Head of caudate nucleus (tissue), 42 donors: ENCODE measurements at regions of chr3 and their contacts with region 1.

Region 1: GRCh38 chr3:150603153-150603979 is at the start of gene SELENOT:
- DNase-seq: peak; percentile 85 to 95 (median 91)

Region 2: DNA sequence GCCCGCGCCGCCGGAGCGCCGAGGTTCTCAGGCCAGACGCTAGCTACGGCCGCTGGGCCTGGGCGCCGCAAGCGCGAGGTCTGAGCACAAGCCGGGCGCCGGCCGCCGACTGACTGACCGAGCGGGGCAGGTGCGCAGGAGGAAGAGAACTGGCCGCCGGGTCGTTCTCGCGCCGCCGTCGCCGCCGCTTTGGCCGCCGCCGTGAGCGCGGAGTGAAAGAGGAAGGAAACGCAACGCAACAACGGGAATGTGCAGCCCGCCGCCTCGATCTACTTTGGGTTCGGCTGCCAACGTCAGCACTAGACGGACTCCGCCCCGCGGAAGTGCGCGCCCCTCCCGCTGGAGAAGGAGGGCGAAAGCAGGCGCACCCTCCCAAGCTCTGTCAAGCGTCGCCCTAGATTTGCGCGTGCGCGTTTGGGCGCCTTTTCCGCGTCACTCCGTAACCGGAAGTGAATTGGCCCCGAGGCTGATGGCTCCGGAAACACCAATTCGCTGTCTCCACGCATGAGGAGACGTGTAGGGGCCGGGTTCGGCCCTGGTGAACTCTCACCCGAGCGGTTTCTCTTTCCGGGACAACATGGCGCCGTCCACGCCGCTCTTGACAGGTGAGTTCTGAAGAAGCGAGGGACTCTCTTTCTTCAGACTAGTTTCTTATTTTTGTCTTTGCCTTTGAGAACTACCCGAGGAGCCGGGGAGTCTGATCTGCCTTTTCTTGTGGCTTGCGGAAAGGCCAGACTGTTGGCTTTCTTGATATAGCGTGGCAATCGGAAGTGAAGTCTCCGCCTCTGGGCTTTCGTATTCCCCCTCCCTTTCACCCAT is 56.9 kb before region 1 on chr3 and contains the starts of genes EIF2A and SERP1:
- intact Hi-C with region 1: loop called (anchors 1 kb)
- DNase-seq: peak; percentile 97 to 100 (median 99)

Region 3: DNA sequence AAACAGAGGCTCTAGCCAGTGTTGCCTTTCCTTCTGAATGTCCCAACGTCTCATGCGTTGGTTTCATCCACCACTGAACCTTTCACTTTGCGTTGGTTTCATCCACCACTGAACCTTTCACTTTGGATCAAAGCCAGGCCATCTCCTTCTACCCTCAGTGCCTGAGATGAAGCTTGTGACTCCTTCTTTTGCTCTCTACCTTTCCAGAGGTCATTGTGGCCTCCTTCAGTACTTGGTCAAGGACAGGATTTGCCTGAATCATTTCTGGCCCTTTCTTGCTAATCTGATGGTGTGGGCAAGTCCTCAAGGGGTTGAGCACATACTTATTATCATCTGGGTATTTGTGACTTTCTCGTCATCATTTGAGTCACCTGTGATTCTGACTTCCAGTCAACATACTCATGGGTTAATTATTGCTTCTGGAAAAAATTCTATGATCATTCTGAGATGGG is 49.8 kb after region 1 on chr3:
- intact Hi-C with region 1: no loop called
- DNase-seq: no peak